ENCODE measurements at regions of chr1 and their contacts with region 1.

Region 1: DNA sequence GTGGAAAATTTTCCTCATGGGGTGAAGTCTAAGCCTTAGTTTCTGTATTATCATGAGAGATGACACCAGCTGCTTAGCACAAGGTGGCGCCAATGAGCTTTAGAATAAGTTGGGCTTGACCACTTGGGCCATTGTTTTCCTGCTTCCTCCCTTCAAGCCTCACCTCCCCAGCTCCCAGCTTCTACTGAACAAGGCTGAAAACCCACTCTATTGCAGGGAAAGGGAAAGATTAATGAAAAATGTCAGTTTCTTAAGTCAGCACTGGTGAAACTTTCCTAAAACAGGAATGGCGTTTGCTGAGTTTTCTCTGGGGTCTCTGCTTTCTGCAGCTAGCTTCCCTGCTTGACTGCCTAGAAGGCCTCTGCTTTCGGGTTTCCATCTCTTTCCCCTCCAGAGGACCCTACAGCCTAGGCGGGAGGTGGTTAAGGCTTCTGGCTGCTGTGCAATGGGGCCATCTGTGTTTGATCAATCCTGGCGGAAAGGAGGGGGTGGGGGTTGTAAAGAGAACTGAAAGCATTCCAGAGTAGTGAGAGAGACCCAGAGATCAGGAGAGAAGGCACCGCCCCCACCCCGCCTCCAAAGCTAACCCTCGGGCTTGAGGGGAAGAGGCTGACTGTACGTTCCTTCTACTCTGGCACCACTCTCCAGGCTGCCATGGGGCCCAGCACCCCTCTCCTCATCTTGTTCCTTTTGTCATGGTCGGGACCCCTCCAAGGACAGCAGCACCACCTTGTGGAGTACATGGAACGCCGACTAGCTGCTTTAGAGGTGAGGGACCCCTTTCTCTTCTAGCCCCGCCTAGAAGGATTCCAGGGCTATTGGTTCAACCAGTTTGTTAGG is at the start of gene OLFML3:
- DNase-seq: peak in 9 of 14 experiments; percentile 10 to 68 (median 36)
- ATAC-seq: no peak
- H3K4me3 ChIP-seq: no peak within 1 kb of the TSS
- H3K4me3 Mint-ChIP-seq: no peak within 1 kb of the TSS
- H3K27ac ChIP-seq: no peak within 1 kb of the TSS
- H3K27ac Mint-ChIP-seq: peak within 1 kb of the TSS; percentile 66
- H3K4me1 ChIP-seq: peaks cover 13% of the 10 kb centered on the region
- H3K4me1 Mint-ChIP-seq: peaks cover 46% of the 10 kb centered on the region
- H3K27me3 ChIP-seq: no peaks in the 10 kb centered on the region
- H3K27me3 Mint-ChIP-seq: no peaks in the 10 kb centered on the region
- CTCF ChIP-seq: peak; percentile 51
- total RNA-seq, gene OLFML3: 0.30 to 0.31 TPM

Region 2: DNA sequence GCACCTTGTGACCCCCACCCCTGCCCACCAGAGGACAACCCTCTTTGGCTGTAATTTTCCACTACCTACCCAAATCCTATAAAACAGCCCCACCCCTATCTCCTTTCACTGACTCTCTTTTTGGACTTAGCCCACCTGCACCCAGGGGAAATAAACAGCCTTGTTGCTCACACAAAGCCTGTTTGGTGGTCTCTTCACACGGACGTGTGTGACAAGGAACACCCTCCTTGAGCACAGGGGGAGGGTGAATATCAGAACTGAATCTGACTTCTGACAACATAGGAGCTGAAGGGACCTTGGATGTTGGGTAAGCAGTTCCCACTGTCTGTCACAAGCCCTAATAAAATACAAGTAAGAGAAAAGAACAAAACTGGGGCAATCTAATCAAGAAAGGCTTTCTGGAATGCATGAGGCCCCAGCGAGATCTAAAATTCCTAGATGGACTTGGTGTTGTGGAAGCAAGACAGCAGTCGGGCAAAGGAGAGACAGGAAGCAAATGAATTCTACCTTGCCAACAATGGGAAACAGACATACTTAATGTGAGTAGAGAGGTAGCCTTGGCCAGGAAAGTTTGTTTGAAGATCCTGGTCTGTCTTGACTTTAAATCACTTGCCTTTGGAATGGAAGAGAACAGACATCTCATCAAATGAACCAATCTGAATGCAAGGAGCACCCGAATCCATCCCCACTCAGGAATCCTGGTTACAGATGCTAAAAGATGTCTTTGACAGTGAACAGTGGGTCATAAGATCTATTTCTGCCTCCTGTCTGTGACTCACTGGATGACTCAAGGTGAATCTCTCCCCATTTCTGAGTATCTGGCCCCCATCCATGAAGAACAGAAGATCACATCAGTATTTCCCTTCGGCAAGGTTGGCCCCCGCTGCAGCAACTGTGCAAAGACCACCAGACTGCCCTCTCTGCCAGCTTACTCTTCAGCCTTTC is 53.5 kb after region 1 on chr1:
- CTCF ChIA-PET with region 1: no interaction called
- POLR2A ChIA-PET with region 1: no interaction called
- intact Hi-C with region 1: no loop called
- DNase-seq: peak in 2 of 14 experiments; percentile 15 to 32
- ATAC-seq: no peak
- H3K4me3 ChIP-seq: no peak overlapping the region
- H3K4me3 Mint-ChIP-seq: no peak overlapping the region
- H3K27ac ChIP-seq: no peak overlapping the region
- H3K27ac Mint-ChIP-seq: no peak overlapping the region
- H3K4me1 ChIP-seq: no peaks in the 10 kb centered on the region
- H3K4me1 Mint-ChIP-seq: no peaks in the 10 kb centered on the region
- H3K27me3 ChIP-seq: no peaks in the 10 kb centered on the region
- H3K27me3 Mint-ChIP-seq: no peaks in the 10 kb centered on the region
- CTCF ChIP-seq: no peak

Region 3: GRCh38 chr1:114282751-114283403 is 303.8 kb after region 1 on chr1:
- CTCF ChIA-PET with region 1: interaction called, 3 read pairs
- POLR2A ChIA-PET with region 1: no interaction called
- intact Hi-C with region 1: loop called (anchors 2 kb)
- DNase-seq: peak; percentile 70 to 91 (median 78)
- ATAC-seq: peak; percentile 100
- H3K4me3 ChIP-seq: no peak overlapping the region
- H3K4me3 Mint-ChIP-seq: no peak overlapping the region
- H3K27ac ChIP-seq: no peak overlapping the region
- H3K27ac Mint-ChIP-seq: no peak overlapping the region
- H3K4me1 ChIP-seq: no peaks in the 10 kb centered on the region
- H3K4me1 Mint-ChIP-seq: no peaks in the 10 kb centered on the region
- H3K27me3 ChIP-seq: no peaks in the 10 kb centered on the region
- H3K27me3 Mint-ChIP-seq: no peaks in the 10 kb centered on the region
- CTCF ChIP-seq: peak; percentile 84

Region 4: DNA sequence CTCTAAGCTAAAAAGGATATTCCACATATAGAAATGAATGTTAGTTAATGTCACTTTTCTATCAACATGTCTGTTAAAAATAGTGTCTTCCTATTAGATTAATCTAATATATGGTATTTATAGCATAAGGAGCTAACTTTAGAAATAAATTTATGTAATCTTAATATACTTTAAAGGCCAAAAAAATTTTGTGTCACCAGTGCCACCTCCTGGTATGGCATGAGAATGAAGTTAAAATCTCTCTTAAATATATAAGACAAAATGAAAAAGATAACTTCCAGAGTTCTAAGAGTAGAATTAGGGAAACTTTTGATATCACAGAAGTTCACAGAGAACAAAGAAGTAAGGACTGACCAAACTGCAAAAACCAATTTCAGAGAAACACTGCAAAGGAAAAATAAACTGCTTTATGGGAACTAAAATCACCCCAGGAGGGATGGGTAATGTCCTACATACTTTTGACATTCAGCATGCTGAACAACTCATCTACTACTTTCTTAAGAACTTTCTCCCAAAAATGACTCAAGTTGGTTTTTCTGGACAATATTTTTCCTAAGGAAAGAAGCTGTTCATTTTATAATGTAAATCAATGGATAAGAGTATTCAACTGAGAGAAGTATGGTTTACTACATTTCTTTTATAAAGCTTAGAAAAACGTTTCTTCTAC is 449.1 kb after region 1 on chr1:
- CTCF ChIA-PET with region 1: no interaction called
- POLR2A ChIA-PET with region 1: no interaction called
- intact Hi-C with region 1: loop called in 1 of 2 experiments (anchors 1 kb)
- DNase-seq: peak in 4 of 14 experiments; percentile 28 to 53 (median 40)
- ATAC-seq: peak; percentile 41
- H3K4me3 ChIP-seq: no peak overlapping the region
- H3K4me3 Mint-ChIP-seq: no peak overlapping the region
- H3K27ac ChIP-seq: no peak overlapping the region
- H3K27ac Mint-ChIP-seq: no peak overlapping the region
- H3K4me1 ChIP-seq: no peaks in the 10 kb centered on the region
- H3K4me1 Mint-ChIP-seq: no peaks in the 10 kb centered on the region
- H3K27me3 ChIP-seq: no peaks in the 10 kb centered on the region
- H3K27me3 Mint-ChIP-seq: no peaks in the 10 kb centered on the region
- CTCF ChIP-seq: peak; percentile 59

Region 5: DNA sequence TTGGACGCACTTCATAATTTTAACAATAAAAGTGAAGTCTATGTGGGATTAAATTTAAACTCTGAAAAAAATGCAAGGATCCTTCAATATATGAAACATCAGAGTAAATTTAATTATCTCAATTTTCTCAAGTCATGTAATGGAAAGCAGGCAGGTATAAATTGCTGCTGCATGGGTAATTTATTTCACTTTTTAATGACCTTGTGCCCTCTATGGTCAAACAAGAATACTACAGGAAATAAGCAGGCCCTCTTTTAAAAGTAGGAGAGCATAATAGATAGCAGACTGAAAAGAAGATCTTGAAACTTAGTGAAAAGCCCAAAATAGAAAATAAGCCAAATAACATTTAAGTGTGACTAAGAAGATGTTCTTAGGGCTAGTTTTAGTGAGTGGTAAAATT is 579.5 kb after region 1 on chr1:
- CTCF ChIA-PET with region 1: no interaction called
- POLR2A ChIA-PET with region 1: no interaction called
- intact Hi-C with region 1: loop called (anchors 2 kb)
- DNase-seq: peak in 3 of 14 experiments; percentile 36 to 41 (median 37)
- ATAC-seq: peak; percentile 52
- H3K4me3 ChIP-seq: no peak overlapping the region
- H3K4me3 Mint-ChIP-seq: no peak overlapping the region
- H3K27ac ChIP-seq: no peak overlapping the region
- H3K27ac Mint-ChIP-seq: no peak overlapping the region
- H3K4me1 ChIP-seq: no peaks in the 10 kb centered on the region
- H3K4me1 Mint-ChIP-seq: no peaks in the 10 kb centered on the region
- H3K27me3 ChIP-seq: no peaks in the 10 kb centered on the region
- H3K27me3 Mint-ChIP-seq: no peaks in the 10 kb centered on the region
- CTCF ChIP-seq: peak; percentile 65

Region 6: DNA sequence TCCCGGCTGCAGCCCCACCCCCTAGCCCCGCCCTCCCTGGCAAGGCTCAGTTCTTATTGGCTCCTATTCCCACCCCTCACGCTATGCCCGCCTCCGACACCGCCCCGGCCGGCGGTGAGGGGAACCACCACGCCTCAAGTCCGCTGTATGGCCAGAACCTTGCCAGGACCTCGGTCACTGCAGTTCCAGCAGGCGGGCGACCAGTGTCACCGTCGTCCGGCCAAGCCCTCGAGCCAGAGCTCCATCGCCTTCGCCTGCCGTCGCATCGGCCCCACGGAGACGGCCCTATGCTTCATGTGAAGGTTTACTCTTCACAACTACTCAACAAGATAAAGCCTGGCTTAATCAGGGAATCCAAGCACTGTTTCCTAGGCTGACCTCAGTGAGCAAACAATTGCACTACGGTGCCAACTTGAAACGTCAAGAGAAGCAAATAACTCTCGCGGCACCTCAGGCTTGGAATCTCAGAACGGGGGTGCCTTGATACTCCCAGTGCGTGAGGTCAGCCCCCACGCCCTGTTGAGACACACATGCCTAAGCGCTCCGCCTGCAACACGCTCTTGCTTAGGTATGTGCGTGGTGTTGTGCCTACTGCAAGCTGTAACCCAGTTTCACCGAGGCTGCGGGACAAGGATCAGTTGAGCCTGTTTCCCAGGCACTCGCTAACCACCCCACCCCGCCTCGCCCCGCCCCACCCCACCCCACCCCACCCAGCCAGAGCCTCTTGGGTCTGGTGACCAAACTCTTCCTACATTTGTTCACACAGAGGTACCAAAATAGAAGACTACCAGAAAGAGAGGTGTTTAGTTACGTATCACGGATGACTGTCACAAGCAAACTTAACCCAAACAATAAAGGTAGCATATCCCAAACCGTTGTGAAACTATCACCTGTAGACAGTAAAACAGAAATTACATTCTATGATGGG is 691.3 kb after region 1 on chr1:
- CTCF ChIA-PET with region 1: no interaction called
- POLR2A ChIA-PET with region 1: no interaction called
- intact Hi-C with region 1: loop called in 1 of 2 experiments (anchors 2 kb)
- DNase-seq: peak; percentile 74 to 93 (median 84)
- ATAC-seq: peak; percentile 94
- H3K4me3 ChIP-seq: peak overlapping the region; percentile 81
- H3K4me3 Mint-ChIP-seq: peak overlapping the region; percentile 99
- H3K27ac ChIP-seq: no peak overlapping the region
- H3K27ac Mint-ChIP-seq: peak overlapping the region; percentile 77
- H3K4me1 ChIP-seq: peaks cover 14% of the 10 kb centered on the region
- H3K4me1 Mint-ChIP-seq: peaks cover 12% of the 10 kb centered on the region
- H3K27me3 ChIP-seq: peaks cover 5 to 8% of the 10 kb centered on the region in 2 experiments
- H3K27me3 Mint-ChIP-seq: peaks cover 28% of the 10 kb centered on the region
- CTCF ChIP-seq: no peak

Measured in CD4-positive, alpha-beta T cell (primary cell).